Endothelial cell of umbilical vein (primary cell): ENCODE measurements at regions of chr10 and their contacts with region 1.

Region 1: GRCh38 chr10:119872860-119873681 is 428 bp upstream of the MCMBP start:
- DNase-seq: peak; percentile 92
- H3K4me3 ChIP-seq: peak overlapping the region; percentile 20 to 96 (median 96)
- H3K27ac ChIP-seq: peak overlapping the region; percentile 81
- H3K4me1 ChIP-seq: peaks cover 18% of the 10 kb centered on the region
- H3K27me3 ChIP-seq: no peaks in the 10 kb centered on the region
- CTCF ChIP-seq: no peak
- POLR2A ChIP-seq: peak; percentile 79

Region 2: DNA sequence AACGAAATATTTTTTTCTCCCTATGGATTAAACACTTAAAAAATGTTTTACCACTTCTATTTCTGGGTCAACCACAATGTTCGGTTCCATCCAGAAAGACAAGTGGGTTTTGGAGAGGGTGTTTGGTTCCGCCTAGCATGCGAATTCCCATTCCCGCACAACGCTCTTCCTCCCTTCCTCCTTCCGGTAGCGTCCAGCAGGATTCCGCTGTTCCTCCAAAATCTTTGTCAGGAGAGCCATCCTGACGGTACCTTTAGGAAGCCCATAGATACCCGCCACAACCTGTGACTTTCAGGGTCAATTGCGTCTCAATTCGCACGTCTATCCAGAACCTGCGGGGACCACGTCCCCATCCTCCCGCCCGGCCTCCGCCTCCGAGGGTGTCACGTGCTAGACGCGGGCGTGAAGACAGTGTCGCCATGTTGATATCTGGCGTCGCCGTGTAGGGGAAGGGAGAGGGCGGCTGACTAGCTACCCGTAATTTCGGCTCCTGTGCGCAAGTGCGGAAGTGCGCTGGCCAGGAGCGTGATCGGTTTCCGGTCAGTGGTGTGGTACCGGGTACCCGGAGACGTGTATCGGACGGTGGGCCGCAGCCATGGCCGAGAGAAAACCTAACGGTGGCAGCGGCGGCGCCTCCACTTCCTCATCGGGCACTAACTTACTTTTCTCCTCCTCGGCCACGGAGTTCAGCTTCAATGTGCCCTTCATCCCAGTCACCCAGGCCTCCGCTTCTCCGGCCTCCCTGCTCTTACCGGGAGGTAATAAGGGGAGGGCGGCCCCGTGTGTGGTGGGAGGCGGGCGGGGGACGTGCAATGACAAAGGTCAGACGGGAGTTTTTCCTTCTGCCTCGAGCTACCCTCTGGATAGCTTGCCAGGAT is 19.4 kb after region 1 on chr10 and contains the start of gene SEC23IP:
- CTCF ChIA-PET with region 1: interaction called, 7 read pairs
- POLR2A ChIA-PET with region 1: interaction called, 5 read pairs
- dilution Hi-C with region 1: no loop called
- intact Hi-C with region 1: loop called (anchors 1 kb)
- DNase-seq: peak; percentile 97
- H3K4me3 ChIP-seq: peak within 1 kb of the TSS; percentile 68 to 85 (median 71)
- H3K27ac ChIP-seq: peak within 1 kb of the TSS; percentile 42
- H3K4me1 ChIP-seq: peaks cover 12% of the 10 kb centered on the region
- H3K27me3 ChIP-seq: no peaks in the 10 kb centered on the region
- CTCF ChIP-seq: no peak
- POLR2A ChIP-seq: peak; percentile 95
- total RNA-seq, gene SEC23IP: 83.1 and 85.4 TPM in 2 replicates